ENCODE measurements at regions of chr1 and their contacts with region 1.

Region 1: DNA sequence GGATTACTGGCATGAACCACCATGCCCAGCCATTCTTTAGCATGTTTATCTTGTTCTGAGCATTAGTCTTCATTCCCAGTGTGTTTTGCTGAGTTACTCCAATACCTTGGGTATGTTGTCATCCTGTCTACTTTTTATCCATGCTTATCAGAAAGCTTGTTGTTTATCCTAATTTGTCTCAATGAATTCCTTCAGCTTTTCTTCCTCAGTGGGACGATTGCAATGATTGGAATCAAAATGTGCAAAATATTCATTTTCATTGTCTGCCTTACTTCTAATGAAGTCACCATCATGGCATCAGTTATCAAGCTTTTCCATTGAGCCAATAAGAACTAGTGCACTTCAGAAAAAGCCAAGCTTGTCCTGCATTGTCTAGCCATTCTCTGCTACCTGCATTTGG is 170.5 kb downstream of the HFM1 start:
- DNase-seq: no peak
- ATAC-seq: no peak
- H3K4me3 ChIP-seq: no peak overlapping the region
- H3K4me3 Mint-ChIP-seq: no peak overlapping the region
- H3K27ac ChIP-seq: no peak overlapping the region
- H3K27ac Mint-ChIP-seq: no peak overlapping the region
- H3K4me1 ChIP-seq: no peaks in the 10 kb centered on the region
- H3K4me1 Mint-ChIP-seq: no peaks in the 10 kb centered on the region
- H3K27me3 ChIP-seq: no peaks in the 10 kb centered on the region
- H3K27me3 Mint-ChIP-seq: peaks cover 10 to 23% of the 10 kb centered on the region in 2 donors
- CTCF ChIP-seq: no peak

Region 2: DNA sequence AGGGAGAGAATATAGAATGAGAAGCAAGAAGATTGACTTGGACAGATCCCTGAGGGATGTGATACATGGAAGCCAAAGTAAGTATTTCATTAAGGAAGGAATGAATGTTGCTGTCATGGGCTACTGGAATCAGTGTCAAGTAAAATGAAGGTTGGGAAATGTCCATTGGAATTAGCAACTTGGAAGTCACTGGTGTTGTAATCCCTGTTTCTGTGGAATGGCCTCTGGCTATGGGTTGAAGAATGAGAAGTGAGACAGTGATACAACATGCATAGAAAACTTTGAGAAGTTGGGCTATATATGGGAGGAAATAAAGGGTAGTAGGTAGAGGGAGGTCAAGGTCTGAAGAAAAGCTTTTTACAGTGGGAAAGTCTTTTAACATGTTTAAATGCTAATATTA is 2001.1 kb after region 1 on chr1:
- intact Hi-C with region 1: loop called (anchors 10 kb)
- DNase-seq: no peak
- ATAC-seq: no peak
- H3K4me3 ChIP-seq: no peak overlapping the region
- H3K4me3 Mint-ChIP-seq: no peak overlapping the region
- H3K27ac ChIP-seq: no peak overlapping the region
- H3K27ac Mint-ChIP-seq: no peak overlapping the region
- H3K4me1 ChIP-seq: no peaks in the 10 kb centered on the region
- H3K4me1 Mint-ChIP-seq: no peaks in the 10 kb centered on the region
- H3K27me3 ChIP-seq: no peaks in the 10 kb centered on the region
- H3K27me3 Mint-ChIP-seq: no peaks in the 10 kb centered on the region
- CTCF ChIP-seq: no peak